Activated CD8-positive, alpha-beta T cell treated with anti-CD3 and anti-CD28 coated beads for 36 hours (primary cell): ENCODE measurements at regions of chr3 and their contacts with region 1.

Region 1: GRCh38 chr3:188749010-188749617 is 422.7 kb upstream of the TPRG1 start:
- DNase-seq: peak; percentile 60
- ATAC-seq: no peak
- H3K4me3 Mint-ChIP-seq: no peak overlapping the region
- H3K27ac Mint-ChIP-seq: no peak overlapping the region
- H3K4me1 Mint-ChIP-seq: peaks cover 27% of the 10 kb centered on the region
- H3K27me3 Mint-ChIP-seq: no peaks in the 10 kb centered on the region
- CTCF ChIP-seq: peak; percentile 69

Region 2: GRCh38 chr3:188446014-188446413 is 303.1 kb before region 1 on chr3:
- CTCF ChIA-PET with region 1: no interaction called
- POLR2A ChIA-PET with region 1: no interaction called
- intact Hi-C with region 1: no loop called
- DNase-seq: peak; percentile 11
- ATAC-seq: peak; percentile 64
- H3K4me3 Mint-ChIP-seq: no peak overlapping the region
- H3K27ac Mint-ChIP-seq: peak overlapping the region; percentile 21
- H3K4me1 Mint-ChIP-seq: peaks cover 34% of the 10 kb centered on the region
- H3K27me3 Mint-ChIP-seq: no peaks in the 10 kb centered on the region
- CTCF ChIP-seq: no peak

Region 3: DNA sequence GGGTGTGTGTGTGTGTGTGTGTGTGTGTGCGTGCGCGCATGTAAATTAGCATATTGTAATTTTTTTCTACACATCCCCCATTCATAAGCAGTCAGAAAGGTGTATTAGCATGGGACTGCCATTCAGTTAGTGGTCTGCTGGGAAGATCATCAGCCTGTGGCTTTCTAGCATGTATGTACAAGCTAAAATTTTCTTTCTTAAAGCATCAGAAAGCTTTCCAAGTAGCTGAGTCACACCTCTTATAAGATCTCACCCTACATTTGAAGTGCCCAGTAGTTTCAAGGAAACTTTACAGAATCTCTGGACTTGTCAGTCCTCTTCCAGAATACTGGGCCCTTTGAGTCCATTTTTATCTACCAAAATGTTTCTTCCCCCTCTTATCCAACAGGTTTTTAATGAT is 11.3 kb after region 1 on chr3:
- CTCF ChIA-PET with region 1: interaction called, 21 read pairs
- POLR2A ChIA-PET with region 1: no interaction called
- intact Hi-C with region 1: no loop called
- DNase-seq: no peak
- ATAC-seq: no peak
- H3K4me3 Mint-ChIP-seq: no peak overlapping the region
- H3K27ac Mint-ChIP-seq: no peak overlapping the region
- H3K4me1 Mint-ChIP-seq: no peaks in the 10 kb centered on the region
- H3K27me3 Mint-ChIP-seq: no peaks in the 10 kb centered on the region
- CTCF ChIP-seq: no peak

Region 4: GRCh38 chr3:188788621-188789081 is 39.5 kb after region 1 on chr3:
- CTCF ChIA-PET with region 1: interaction called, 7 read pairs
- POLR2A ChIA-PET with region 1: no interaction called
- intact Hi-C with region 1: loop called (anchors 2 kb)
- DNase-seq: peak; percentile 94
- ATAC-seq: peak; percentile 97
- H3K4me3 Mint-ChIP-seq: no peak overlapping the region
- H3K27ac Mint-ChIP-seq: no peak overlapping the region
- H3K4me1 Mint-ChIP-seq: peaks cover 2% of the 10 kb centered on the region
- H3K27me3 Mint-ChIP-seq: no peaks in the 10 kb centered on the region
- CTCF ChIP-seq: no peak